ENCODE measurements at regions of chr5 and their contacts with region 1.

Region 1: GRCh38 chr5:172640822-172641358 is at the start of gene NEURL1B:
- DNase-seq: peak; percentile 63 to 82 (median 79)
- H3K4me3 ChIP-seq: peak within 1 kb of the TSS; percentile 64 to 88 (median 68)
- H3K27ac ChIP-seq: peak within 1 kb of the TSS in 1 of 2 experiments; percentile 16
- H3K4me1 ChIP-seq: peaks cover 0 to 70% (median 42%) of the 10 kb centered on the region in 4 experiments
- H3K27me3 ChIP-seq: peaks cover 0 to 6% (median 0%) of the 10 kb centered on the region in 5 experiments

Region 2: DNA sequence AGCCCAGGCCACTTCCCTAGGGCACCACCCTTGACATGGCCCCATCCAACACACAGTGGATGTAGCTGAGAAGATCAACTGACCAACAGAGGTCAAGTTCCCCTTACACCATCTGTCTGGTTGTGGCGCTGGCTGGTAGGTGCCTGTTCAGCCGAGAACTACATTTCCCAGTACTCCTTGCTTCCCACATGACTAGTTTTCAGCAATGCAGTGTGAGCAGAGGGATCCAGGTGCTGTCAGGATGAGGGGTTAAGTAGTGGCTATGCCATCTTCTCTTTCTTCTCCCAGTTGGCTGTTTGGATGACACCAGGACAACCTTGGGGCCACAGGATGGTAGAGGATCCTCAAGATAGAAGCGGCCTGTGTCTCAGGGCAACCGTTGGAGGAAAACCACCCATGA is 137.9 kb before region 1 on chr5:
- CTCF ChIA-PET with region 1: no interaction called
- POLR2A ChIA-PET with region 1: no interaction called
- DNase-seq: no peak
- H3K4me3 ChIP-seq: no peak overlapping the region
- H3K27ac ChIP-seq: no peak overlapping the region
- H3K4me1 ChIP-seq: no peaks in the 10 kb centered on the region
- H3K27me3 ChIP-seq: no peaks in the 10 kb centered on the region

Region 3: DNA sequence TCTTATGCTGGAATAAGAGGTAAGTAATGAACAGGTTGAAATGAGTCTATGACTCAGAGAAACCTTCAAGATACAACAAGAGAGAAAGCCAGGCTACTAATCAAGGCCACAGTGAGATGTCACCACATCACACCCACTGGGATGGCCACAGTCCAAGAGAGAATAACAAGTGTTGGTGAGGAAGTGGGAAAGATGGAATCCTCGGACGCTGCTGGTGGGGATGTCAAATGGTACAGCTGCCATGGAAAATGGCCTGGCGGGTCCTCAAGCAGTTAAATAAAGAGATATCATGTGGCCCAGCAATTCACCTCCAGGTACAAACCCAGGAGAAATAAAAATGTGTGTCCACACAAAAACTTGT is 41.7 kb before region 1 on chr5:
- CTCF ChIA-PET with region 1: no interaction called
- POLR2A ChIA-PET with region 1: no interaction called
- DNase-seq: no peak
- H3K4me3 ChIP-seq: no peak overlapping the region
- H3K27ac ChIP-seq: no peak overlapping the region
- H3K4me1 ChIP-seq: peaks cover 0 to 7% (median 2%) of the 10 kb centered on the region in 4 experiments
- H3K27me3 ChIP-seq: no peaks in the 10 kb centered on the region

Region 4: DNA sequence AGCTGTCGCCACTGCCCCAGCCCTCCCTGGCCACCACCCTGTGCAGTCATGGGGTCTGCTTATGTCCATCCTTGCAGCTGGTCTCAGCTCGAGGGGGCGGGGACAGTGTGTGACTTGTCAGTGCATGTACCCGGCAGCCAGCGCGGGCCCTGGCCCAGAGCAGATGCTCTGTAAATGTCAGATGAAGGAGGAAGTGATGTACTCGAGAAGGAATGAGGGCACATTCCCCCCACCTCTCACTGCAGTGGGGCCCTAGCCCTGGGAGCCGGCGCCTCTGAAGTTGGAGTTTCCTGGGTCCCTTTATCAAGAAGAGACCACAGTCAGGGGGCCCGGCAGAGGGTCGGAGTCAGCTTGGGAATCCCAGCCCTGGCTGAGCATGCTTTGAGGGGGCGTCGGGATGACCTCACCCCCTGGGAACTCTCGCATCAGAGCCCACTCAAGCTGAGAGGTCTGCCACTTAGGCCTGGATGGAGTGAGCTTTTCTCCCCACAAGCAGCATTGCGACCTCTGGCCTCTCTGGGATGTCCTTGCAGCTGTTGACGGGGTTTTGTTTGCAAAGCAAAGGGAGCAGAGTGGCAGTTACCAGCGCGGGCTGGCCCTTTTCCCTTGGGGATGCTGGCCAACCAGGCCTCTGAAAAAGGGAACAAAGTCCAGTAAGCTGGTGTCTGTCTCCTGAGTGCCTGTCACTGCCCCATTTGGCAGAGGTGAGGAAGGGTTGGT is 19.2 kb after region 1 on chr5:
- CTCF ChIA-PET with region 1: interaction called, 44 read pairs
- POLR2A ChIA-PET with region 1: interaction called, 5 read pairs
- DNase-seq: peak; percentile 40 to 82 (median 72)
- H3K4me3 ChIP-seq: no peak overlapping the region
- H3K27ac ChIP-seq: peak overlapping the region; percentile 33 to 73
- H3K4me1 ChIP-seq: peaks cover 1 to 64% (median 34%) of the 10 kb centered on the region in 4 experiments
- H3K27me3 ChIP-seq: no peaks in the 10 kb centered on the region

Region 5: DNA sequence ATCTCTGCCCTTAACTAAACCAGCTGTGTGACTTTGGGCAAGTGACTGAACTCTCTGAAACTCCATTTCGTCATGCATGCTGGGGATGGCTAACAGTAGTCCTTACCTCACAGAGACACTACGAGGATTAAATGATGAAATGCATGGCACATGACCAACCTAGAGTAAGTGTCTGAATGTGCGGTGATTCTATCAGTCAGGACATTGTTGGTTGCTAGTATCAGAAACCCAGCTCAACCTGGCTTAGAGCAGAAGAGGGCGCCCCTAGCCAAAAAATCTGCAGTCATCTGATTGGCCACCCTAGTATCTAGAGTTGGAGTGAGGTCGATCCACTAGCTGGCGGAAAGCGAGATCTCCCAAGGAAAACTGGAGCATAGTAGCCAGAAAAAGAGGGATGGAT is 25.4 kb after region 1 on chr5:
- CTCF ChIA-PET with region 1: interaction called, 10 read pairs
- POLR2A ChIA-PET with region 1: no interaction called
- DNase-seq: no peak
- H3K4me3 ChIP-seq: no peak overlapping the region
- H3K27ac ChIP-seq: no peak overlapping the region
- H3K4me1 ChIP-seq: peaks cover 0 to 23% (median 6%) of the 10 kb centered on the region in 4 experiments
- H3K27me3 ChIP-seq: peaks cover 0 to 3% (median 0%) of the 10 kb centered on the region in 5 experiments

Region 6: DNA sequence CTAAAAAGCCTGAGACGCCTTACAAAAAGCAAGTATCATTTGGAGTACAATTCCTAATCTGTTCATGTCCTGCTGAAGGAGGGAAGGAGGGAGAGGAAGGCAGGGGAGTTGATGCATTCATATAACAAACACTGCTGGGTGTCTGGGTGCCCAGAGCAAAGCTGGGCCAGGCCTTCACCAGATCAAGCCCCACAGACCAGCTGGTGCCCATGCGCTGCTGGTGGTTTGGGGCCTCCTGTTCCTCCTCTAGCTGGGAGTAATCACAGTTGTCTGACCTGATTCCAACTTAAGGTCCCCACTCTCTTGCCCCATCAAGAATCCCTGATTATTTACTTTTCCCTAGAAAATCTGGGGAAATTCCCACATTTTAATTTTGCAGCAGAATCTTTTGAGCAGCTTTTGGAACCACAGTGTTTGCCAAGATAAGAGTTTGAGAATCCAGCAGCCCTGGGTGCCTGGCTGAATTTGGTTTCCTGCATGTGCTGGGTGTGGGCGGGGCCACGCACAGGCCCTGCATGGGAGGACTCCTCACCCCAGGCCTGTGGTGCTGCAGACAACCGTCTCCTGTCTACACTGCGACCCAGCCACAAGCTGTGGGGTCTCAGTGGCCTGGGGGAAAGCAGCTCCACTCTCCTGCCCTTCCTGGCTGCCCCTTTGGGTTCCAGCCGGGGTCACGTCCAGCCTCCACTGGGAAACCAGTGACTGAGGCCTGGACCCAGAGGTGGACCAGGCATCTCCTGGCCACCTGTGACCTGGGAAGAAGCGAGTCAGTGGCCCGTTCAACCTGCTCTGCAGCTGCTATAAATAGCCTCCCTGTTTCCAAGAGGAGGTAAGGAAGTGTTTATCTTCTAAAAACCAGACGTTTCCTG is 47.7 kb after region 1 on chr5:
- CTCF ChIA-PET with region 1: interaction called, 13 read pairs
- POLR2A ChIA-PET with region 1: interaction called, 4 read pairs
- DNase-seq: peak in 2 of 3 donors; percentile 85 to 94
- H3K4me3 ChIP-seq: peak overlapping the region in 1 of 7 experiments; percentile 12
- H3K27ac ChIP-seq: peak overlapping the region; percentile 25 to 73
- H3K4me1 ChIP-seq: peaks cover 11 to 51% (median 43%) of the 10 kb centered on the region in 4 experiments
- H3K27me3 ChIP-seq: no peaks in the 10 kb centered on the region

Measured in common myeloid progenitor, CD34-positive (primary cell).